Transverse colon (tissue), 4 donors: ENCODE measurements at regions of chr17 and their contacts with region 1.

Region 1: DNA sequence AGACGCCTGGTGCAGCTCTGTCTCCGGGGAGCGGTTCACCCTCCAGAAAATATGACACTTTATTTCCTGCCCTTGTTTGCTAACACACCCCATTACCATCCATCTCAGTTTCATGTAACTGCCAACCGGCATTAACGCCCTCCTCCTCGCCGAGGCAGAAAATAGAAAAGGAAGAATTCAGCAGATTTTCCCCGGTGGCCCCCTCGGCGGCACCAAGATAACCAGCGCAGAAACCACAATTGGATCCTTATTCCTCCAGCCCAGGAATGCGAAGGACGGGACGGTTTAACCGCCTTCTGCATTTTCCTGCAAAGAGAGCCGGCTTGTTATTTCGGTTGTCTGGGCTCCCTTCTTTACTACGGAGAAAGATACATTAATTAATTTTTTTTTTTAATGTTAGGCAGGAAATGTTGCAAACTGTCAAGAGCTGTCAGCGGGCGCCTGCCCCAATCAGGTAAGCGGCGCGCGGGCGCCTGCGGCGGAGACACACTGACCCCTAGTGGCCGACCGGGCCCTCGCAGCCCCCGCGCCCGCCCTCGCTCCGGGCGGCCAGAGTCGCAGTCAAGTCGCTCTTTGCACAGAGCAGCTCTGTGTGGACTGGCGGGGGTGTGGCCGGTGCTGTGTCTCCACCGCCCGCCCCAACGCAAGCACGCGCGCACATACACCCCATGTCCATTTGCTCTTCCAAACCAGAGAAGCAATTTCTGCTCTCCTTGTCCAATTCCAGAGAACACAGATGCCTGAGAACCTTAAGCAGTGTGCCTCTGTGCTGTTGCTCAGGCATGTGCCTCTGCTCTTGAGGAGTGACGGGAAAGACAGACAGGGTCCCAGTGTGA is 53.6 kb downstream of the C17orf67 start:
- DNase-seq: peak; percentile 82
- H3K4me3 ChIP-seq: peak overlapping the region in 3 of 4 donors; percentile 15 to 54 (median 22)
- H3K27ac ChIP-seq: no peak overlapping the region
- H3K4me1 ChIP-seq: peaks cover 0 to 13% (median 10%) of the 10 kb centered on the region in 4 donors
- H3K27me3 ChIP-seq: peaks cover 49% of the 10 kb centered on the region
- CTCF ChIP-seq: peak; percentile 84 to 99 (median 99)
- EP300 ChIP-seq: no peak
- POLR2A ChIP-seq: no peak

Region 2: DNA sequence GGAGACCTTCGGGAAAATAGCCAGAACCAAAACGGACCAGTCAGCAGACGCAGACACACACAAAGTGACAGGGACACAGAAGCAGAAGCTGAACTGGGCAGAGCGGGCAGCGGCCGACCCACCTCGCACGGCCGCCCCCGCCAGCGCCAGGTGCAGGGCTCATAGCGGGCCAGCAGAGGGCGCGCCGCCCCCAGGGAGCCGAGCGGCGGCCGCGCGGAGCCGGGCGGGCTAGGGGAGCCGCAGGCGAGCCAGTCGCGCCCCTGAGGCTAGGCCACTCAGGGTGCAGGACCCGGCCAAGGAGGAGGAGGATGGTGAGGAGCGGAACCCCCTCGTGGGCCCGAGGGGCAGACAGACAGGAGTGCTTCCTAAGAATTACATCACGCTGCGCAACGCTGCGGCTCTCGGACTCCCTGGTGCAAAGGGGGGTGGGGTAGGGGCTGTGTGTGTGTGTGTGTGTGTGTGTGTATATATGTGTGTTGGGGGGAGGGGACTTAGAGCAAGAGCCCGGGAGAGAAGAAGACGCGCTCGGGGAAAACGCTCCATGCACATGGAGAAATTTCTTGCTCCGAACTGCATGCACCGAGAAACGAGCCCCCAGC is 187.5 kb before region 1 on chr17:
- in situ Hi-C with region 1: no loop called
- intact Hi-C with region 1: loop called (anchors 10 kb)
- DNase-seq: peak; percentile 41
- H3K4me3 ChIP-seq: peak overlapping the region in 3 of 4 donors; percentile 29 to 63 (median 39)
- H3K27ac ChIP-seq: no peak overlapping the region
- H3K4me1 ChIP-seq: peaks cover 14 to 48% (median 37%) of the 10 kb centered on the region in 4 donors
- H3K27me3 ChIP-seq: peaks cover 95% of the 10 kb centered on the region
- CTCF ChIP-seq: peak; percentile 16 to 94 (median 88)
- EP300 ChIP-seq: no peak
- POLR2A ChIP-seq: no peak

Region 3: DNA sequence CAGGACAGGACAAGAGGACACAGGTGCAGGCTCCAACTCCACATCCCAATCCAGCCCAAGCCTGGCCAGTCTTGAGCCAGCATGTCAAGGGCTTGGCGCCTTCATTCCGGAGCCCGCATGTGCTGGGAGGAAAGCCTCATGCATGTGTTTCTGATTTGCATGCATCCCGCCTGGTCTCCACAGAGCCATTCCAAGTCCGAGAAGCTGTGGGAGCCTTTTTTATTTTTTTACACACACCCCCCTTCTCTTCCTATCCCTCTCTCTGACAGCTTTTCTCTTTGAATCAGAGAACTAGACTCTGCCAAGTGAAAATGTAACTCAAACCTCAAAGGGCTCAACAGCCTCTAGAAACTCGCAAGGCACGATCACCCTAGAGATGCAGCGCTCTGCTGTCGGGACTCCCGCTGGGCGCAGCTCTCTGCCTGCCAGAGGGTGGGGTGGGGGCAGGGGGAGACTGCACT is 141.5 kb before region 1 on chr17:
- in situ Hi-C with region 1: no loop called
- intact Hi-C with region 1: no loop called
- DNase-seq: no peak
- H3K4me3 ChIP-seq: no peak overlapping the region
- H3K27ac ChIP-seq: no peak overlapping the region
- H3K4me1 ChIP-seq: no peaks in the 10 kb centered on the region
- H3K27me3 ChIP-seq: peaks cover 9% of the 10 kb centered on the region
- CTCF ChIP-seq: no peak
- EP300 ChIP-seq: no peak
- POLR2A ChIP-seq: no peak

Region 4: DNA sequence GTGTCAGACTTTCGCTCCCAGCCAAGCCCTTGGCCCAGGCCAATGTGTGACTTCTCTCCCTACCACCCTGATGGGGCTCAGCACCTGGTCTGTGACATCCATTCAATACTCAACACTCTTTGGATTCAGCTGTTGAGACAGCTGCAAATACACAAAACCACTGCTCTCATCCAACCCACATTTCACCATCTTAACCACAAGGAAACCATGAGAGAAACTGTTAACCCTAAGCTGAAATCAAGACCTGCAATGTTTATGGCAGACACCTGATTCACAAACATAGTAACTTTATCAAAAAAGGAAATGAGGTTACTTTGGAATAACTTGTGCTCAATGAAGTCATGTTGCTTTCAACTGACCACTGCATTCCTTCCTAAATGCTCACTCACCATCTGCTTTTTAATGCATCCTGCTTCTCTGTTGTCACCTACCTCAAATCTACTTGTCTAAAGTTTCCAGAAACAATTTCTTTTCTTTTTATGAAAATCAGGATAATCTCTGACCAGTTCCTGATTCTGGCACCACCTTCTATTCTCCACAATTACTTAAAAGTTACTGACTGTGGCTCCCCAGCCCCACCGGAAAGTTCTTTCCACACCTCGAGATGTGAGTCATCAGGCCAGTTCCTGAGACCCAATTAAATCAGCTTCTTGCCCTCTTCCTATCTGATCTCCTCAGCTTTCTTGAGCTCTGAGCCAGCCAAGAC is 98.4 kb before region 1 on chr17:
- in situ Hi-C with region 1: no loop called
- intact Hi-C with region 1: loop called (anchors 10 kb)
- DNase-seq: no peak
- H3K4me3 ChIP-seq: no peak overlapping the region
- H3K27ac ChIP-seq: no peak overlapping the region
- H3K4me1 ChIP-seq: peaks cover 0 to 10% (median 9%) of the 10 kb centered on the region in 4 donors
- H3K27me3 ChIP-seq: peaks cover 66% of the 10 kb centered on the region
- CTCF ChIP-seq: no peak
- EP300 ChIP-seq: no peak
- POLR2A ChIP-seq: no peak